H1 (cell line): ENCODE measurements at regions of chr7 and their contacts with region 1.

Region 1: DNA sequence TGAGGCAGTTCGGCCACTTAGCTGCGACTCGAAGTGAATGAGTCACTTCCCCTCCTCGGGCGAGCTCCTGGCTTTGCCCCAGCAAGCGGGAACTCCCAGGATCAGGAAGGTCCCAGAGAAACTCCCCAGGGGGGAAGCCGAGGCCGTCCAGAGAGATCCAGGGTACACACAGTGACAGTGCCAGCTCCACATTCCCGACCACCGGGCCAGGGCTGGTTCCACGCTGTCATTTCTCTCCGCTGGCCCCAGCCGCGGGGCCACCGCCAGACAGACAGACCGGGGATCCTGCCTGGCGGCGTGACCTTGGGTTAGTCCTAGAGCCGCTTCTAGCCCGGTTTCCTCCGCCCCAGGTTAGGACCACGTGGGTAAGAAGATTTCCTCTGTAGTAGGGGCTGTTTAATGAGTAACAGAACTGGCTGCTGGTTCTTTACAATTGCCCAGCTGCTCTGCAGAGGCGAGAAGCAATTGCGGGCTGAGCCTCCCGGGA is 463 bp upstream of the UPP1 start:
- DNase-seq: peak in 1 of 2 experiments; percentile 82
- H3K4me3 ChIP-seq: peak overlapping the region; percentile 57 to 85 (median 66)
- H3K27ac ChIP-seq: peak overlapping the region; percentile 66
- H3K4me1 ChIP-seq: peaks cover 5 to 11% (median 7%) of the 10 kb centered on the region in 4 experiments
- H3K27me3 ChIP-seq: no peaks in the 10 kb centered on the region
- CTCF ChIP-seq: no peak
- EP300 ChIP-seq: no peak
- POLR2A ChIP-seq: peak in 1 of 2 experiments; percentile 81; a peak in 2 of 3 replicates
- RAD21 ChIP-seq: no peak

Region 2: GRCh38 chr7:47991741-47992311 is 96.8 kb before region 1 on chr7:
- CTCF ChIA-PET with region 1: interaction called, 10 read pairs
- POLR2A ChIA-PET with region 1: interaction called, 36 read pairs
- DNase-seq: peak; percentile 69 to 87
- H3K4me3 ChIP-seq: peak overlapping the region in 3 of 4 experiments; percentile 29 to 54 (median 43); a peak in 5 of 8 replicates
- H3K27ac ChIP-seq: peak overlapping the region; percentile 42; the same call in 1 of the 2 replicates
- H3K4me1 ChIP-seq: peaks cover 0 to 5% (median 0%) of the 10 kb centered on the region in 4 experiments; a peak in 5 of 7 replicates
- H3K27me3 ChIP-seq: no peaks in the 10 kb centered on the region
- CTCF ChIP-seq: peak; percentile 70 to 73 (median 71)
- EP300 ChIP-seq: no peak; a peak in 1 of 3 replicates
- POLR2A ChIP-seq: peak in 1 of 2 experiments; percentile 47; a peak in 2 of 3 replicates
- RAD21 ChIP-seq: peak; percentile 77 to 83

Region 3: GRCh38 chr7:48041653-48041970 is 47.0 kb before region 1 on chr7:
- CTCF ChIA-PET with region 1: interaction called, 4 read pairs
- POLR2A ChIA-PET with region 1: interaction called, 20 read pairs
- DNase-seq: no peak
- H3K4me3 ChIP-seq: no peak overlapping the region
- H3K27ac ChIP-seq: no peak overlapping the region
- H3K4me1 ChIP-seq: peaks cover 5 to 26% (median 12%) of the 10 kb centered on the region in 4 experiments; a peak in 6 of 7 replicates
- H3K27me3 ChIP-seq: peaks cover 3 to 7% (median 6%) of the 10 kb centered on the region in 4 experiments
- CTCF ChIP-seq: no peak
- EP300 ChIP-seq: no peak
- POLR2A ChIP-seq: no peak
- RAD21 ChIP-seq: no peak

Region 4: DNA sequence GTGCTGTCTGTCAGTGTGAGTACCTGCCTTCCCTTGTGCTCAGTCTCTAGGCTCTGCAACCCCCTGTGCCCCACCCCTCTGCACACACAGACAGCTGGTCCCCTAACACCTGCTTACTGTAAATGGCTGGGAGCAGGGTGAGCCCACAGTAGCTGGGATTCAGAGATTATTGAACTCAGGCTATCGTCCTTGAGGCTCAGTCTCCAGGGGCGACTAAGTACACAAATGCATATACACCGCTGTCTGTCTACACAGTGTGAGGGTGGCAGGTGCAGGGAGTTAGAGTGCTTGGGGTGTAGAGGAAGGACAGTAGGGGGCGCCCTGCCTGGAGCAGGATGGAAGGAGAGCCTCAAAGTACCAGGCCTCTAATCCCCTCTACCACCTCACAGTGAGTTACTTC is 13.4 kb after region 1 on chr7:
- CTCF ChIA-PET with region 1: interaction called, 28 read pairs
- POLR2A ChIA-PET with region 1: interaction called, 31 read pairs
- DNase-seq: peak in 1 of 2 experiments; percentile 69
- H3K4me3 ChIP-seq: no peak overlapping the region
- H3K27ac ChIP-seq: no peak overlapping the region
- H3K4me1 ChIP-seq: no peaks in the 10 kb centered on the region
- H3K27me3 ChIP-seq: no peaks in the 10 kb centered on the region
- CTCF ChIP-seq: peak; percentile 46 to 84 (median 72)
- EP300 ChIP-seq: no peak
- POLR2A ChIP-seq: no peak
- RAD21 ChIP-seq: peak; percentile 31 to 49